AG04449 (cell line): ENCODE measurements at regions of chr11 and their contacts with region 1.

Region 1: GRCh38 chr11:118956094-118956846 is at the start of gene UPK2:
- DNase-seq: no peak
- H3K4me3 ChIP-seq: no peak within 1 kb of the TSS
- CTCF ChIP-seq: peak; percentile 98

Region 2: GRCh38 chr11:118791111-118791965 is 164.9 kb before region 1 on chr11 and contains the start of gene DDX6:
- CTCF ChIA-PET with region 1: interaction called, 11 read pairs
- POLR2A ChIA-PET with region 1: no interaction called
- DNase-seq: no peak
- H3K4me3 ChIP-seq: peak within 1 kb of the TSS; percentile 82
- CTCF ChIP-seq: peak; percentile 67

Region 3: GRCh38 chr11:118907051-118908042 is 48.9 kb before region 1 on chr11:
- CTCF ChIA-PET with region 1: interaction called, 71 read pairs
- POLR2A ChIA-PET with region 1: no interaction called
- DNase-seq: no peak
- H3K4me3 ChIP-seq: peak overlapping the region; percentile 46
- CTCF ChIP-seq: peak; percentile 89

Region 4: DNA sequence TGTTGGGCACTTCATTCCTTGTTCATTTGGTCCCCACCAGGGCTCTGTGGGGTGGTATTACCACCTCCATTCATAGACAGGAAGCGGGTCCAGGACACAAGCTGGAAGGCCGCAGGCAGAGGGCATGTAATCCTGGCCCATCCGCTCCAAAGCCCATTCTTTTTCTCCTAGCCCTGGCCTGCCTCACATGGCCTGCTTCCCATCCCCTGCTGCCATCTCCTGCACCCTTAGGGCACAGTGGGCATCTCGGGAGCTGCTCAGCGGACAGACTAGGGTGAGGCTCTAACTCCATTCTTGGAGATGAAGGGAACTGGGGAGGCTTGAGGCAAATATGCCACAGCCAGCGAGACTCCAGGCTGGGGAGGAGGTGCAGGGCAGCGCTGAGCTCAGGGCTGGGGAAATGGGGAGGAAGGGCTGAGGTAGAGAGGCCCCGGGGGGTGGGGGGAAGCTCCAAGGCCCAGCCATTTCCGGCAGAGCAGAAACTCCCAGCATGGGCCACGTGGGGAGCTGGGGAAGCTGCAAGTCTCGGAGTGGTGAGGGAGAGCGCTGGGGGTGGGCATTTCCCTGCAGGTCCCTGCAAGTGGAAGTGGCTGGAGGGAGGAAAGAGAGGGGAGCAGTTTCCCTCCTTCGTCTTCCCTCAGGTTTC is 16.2 kb before region 1 on chr11:
- CTCF ChIA-PET with region 1: interaction called, 24 read pairs
- POLR2A ChIA-PET with region 1: no interaction called
- DNase-seq: no peak
- H3K4me3 ChIP-seq: no peak overlapping the region
- CTCF ChIP-seq: no peak

Region 5: GRCh38 chr11:119134389-119134978 is 178.2 kb after region 1 on chr11:
- CTCF ChIA-PET with region 1: no interaction called
- POLR2A ChIA-PET with region 1: no interaction called
- DNase-seq: no peak
- H3K4me3 ChIP-seq: no peak overlapping the region
- CTCF ChIP-seq: peak; percentile 56